Activated B cell treated with CpG ODN at 0.5 μM for 24 hours (primary cell): ENCODE measurements at regions of chr19 and their contacts with region 1.

Region 1: GRCh38 chr19:48674921-48675824 is 2.4 kb upstream of the NTN5 start:
- DNase-seq: peak; percentile 47
- ATAC-seq: peak; percentile 96
- H3K4me3 Mint-ChIP-seq: no peak overlapping the region
- H3K27ac Mint-ChIP-seq: no peak overlapping the region
- H3K4me1 Mint-ChIP-seq: peaks cover 7% of the 10 kb centered on the region
- H3K27me3 Mint-ChIP-seq: peaks cover 1% of the 10 kb centered on the region
- CTCF ChIP-seq: peak; percentile 65

Region 2: GRCh38 chr19:48501496-48502350 is 173.4 kb before region 1 on chr19:
- CTCF ChIA-PET with region 1: no interaction called
- POLR2A ChIA-PET with region 1: no interaction called
- intact Hi-C with region 1: loop called (anchors 1 kb)
- DNase-seq: no peak
- ATAC-seq: peak; percentile 64
- H3K4me3 Mint-ChIP-seq: peak overlapping the region; percentile 65
- H3K27ac Mint-ChIP-seq: no peak overlapping the region
- H3K4me1 Mint-ChIP-seq: peaks cover 24% of the 10 kb centered on the region
- H3K27me3 Mint-ChIP-seq: peaks cover 15% of the 10 kb centered on the region
- CTCF ChIP-seq: no peak

Region 3: DNA sequence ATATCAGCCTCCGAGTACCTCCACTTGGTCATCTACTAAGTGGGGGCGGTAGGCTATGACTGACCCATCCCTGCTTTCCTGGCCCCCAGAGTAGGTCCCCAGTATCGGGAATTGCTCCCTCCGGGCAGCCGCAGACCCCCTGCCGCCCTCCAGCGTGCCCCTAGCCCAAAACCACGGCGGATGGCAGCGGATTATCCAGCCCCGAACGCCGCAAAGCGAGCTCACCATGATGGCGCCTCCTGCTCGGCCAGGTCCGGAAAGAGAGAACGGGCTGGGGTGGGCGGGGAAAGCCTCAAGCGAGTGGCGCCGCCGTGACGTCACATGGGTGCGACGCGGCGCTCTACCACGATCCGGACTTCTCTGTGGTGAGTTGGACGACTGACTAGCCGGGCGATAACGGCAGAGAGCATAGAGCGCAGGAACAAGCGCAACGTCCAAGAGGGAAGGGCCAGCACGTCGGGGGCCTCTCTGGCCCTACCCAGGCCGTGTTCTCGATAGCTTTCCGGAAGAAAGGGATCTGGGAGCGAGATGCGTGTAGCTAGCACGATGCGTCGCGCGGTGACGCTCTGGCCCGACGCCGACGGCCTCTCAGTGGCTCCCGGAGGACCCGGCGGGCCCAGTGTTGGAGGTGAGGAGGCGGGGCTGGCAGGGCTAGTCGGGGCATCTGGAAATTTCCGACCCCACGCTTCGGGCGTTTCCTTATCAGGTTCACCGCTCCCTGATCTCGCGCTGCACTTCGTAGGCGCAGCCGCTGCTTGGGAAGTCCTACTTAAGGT is 56.1 kb before region 1 on chr19 and contains the starts of genes RPL18 and SPHK2:
- CTCF ChIA-PET with region 1: no interaction called
- POLR2A ChIA-PET with region 1: no interaction called
- intact Hi-C with region 1: loop called (anchors 1 kb)
- DNase-seq: peak; percentile 93
- ATAC-seq: peak; percentile 81
- H3K4me3 Mint-ChIP-seq: peak within 1 kb of the TSS; percentile 98
- H3K27ac Mint-ChIP-seq: peak within 1 kb of the TSS; percentile 97
- H3K4me1 Mint-ChIP-seq: peaks cover 56% of the 10 kb centered on the region
- H3K27me3 Mint-ChIP-seq: no peaks in the 10 kb centered on the region
- CTCF ChIP-seq: no peak
- total RNA-seq, gene RPL18: 2,427 and 2,762 TPM in 2 replicates
- total RNA-seq, gene SPHK2: 38.2 and 48.5 TPM in 2 replicates

Region 4: DNA sequence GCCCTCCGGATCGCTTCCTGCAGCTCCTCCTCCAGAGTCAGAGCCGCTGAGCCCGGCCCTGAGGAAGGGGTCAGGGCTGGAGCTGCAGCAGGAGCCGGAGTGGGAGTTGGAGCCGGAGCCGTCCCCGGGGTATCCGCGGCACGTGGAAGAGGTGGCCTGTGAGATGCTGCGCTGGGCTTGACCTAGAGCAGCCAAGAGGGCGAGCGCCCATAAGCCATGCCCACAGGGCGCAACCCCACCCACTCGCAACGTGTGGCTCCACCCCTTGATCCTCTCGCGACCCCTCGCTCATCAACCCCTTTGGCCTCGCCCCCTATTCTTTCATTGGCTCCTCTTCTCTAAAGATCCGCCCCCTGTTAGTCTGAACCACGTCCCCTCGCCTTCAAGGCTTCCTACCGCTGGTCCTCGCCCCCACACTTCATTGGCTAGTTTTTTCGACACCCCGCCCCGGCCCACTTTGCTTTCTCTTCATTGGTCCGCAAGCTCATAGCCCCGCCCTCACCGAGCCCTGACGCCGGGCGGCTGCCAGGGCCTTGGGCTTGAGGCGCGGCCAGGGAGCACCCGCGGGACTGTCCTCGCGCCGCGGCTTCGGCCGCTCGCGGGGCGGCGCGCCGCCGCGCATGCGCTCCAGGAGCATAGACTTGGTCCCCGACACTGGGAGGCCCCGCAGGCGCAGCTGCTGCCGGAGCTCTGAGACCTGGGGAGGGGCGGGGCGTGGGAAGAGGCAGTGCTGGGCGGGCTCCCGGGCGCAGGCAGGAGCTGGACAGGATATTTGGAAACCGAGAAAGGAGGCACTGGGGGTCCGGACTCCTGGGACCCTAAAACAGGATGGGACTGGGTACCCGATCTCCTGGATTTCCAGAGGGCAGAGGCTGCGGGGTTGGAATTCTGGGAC is 38.9 kb after region 1 on chr19:
- CTCF ChIA-PET with region 1: interaction called, 3 read pairs
- POLR2A ChIA-PET with region 1: no interaction called
- intact Hi-C with region 1: loop called (anchors 5 kb)
- DNase-seq: peak; percentile 94
- ATAC-seq: peak; percentile 91
- H3K4me3 Mint-ChIP-seq: peak overlapping the region; percentile 81
- H3K27ac Mint-ChIP-seq: peak overlapping the region; percentile 77
- H3K4me1 Mint-ChIP-seq: peaks cover 25% of the 10 kb centered on the region
- H3K27me3 Mint-ChIP-seq: no peaks in the 10 kb centered on the region
- CTCF ChIP-seq: no peak

Region 5: GRCh38 chr19:48738557-48739399 is 63.6 kb after region 1 on chr19:
- CTCF ChIA-PET with region 1: interaction called, 4 read pairs
- POLR2A ChIA-PET with region 1: no interaction called
- intact Hi-C with region 1: loop called (anchors 1 kb)
- DNase-seq: peak; percentile 86
- ATAC-seq: peak; percentile 94
- H3K4me3 Mint-ChIP-seq: peak overlapping the region; percentile 66
- H3K27ac Mint-ChIP-seq: peak overlapping the region; percentile 70
- H3K4me1 Mint-ChIP-seq: peaks cover 20% of the 10 kb centered on the region
- H3K27me3 Mint-ChIP-seq: peaks cover 8% of the 10 kb centered on the region
- CTCF ChIP-seq: no peak